ENCODE measurements at regions of chr1 and their contacts with region 1.

Region 1: DNA sequence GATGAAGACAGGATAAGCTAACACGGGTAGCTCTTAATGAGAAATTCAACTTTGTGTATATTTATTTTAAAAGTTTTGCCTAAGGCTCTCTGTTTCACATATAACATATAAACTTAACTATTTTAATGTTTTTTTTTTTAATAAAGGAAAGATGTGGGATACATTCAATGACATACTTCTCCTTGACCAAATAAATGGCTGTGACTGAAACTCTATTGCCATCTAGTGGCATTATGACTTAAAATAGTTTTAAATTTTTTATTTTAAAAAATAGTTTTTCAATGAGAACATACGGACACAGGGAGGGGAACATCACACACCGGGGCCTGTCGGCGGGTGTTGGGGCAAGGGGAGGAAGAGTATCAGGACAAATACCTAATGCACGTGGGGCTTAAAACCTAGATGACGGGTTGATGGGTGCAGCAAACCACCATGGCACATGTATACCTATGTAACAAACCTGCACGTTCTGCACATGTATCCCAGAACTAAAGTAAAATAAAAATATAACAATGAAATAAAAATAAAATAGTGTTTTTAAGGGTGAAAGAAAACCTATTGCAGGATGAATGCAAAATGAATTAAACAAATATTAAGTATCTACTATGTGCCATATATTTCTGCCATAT is 83.4 kb downstream of the LYST start:
- DNase-seq: peak; percentile 9 to 52
- H3K4me3 ChIP-seq: no peak overlapping the region
- H3K27ac ChIP-seq: no peak overlapping the region
- H3K4me1 ChIP-seq: 0 out of 2 replicates have a peak, but pooled peaks cover 4% of the 10 kb centered on the region
- H3K27me3 ChIP-seq: no peaks in the 10 kb centered on the region
- CTCF ChIP-seq: peak; percentile 71

Region 2: DNA sequence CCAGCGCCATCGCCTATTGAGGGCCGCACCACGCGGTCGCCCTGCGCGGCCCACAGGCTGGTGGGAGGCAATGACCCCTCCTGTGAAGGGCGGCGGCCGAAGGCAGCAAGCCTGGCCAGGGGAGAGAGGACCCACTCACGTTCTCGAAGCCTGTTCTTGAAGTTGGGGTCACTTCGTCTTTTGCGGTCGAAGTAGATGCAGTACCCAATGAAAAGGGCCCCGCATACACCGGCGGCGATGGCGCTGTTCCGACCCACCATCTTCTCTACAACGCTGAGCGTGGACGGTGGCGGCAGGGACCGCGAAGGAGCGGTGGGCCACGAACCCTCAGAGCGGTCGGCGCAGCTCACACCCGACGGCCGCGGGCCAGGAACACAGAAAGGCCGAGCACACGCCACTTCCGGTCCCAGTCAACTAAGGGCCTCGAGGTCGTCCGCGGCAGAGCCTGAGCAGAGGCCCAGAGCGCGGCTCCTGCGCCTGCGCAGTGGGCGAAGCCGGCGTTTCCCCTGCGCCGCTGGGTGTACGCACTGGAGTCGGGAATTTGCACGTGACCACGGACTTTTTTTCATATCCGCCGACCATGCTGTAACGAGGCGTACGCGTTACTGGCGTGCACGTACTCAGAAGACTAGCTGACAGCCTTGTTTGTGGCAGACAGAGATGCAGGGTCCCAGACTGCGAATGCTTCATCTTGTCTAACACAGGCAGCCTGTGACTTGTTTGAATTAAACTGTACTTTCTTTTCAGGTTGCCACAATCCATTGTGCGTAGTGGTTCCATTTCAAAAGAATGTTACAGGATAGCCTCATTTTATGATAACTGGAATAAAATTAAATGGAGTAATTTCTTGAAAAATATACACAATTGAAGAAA is 654.6 kb before region 1 on chr1 and contains the start of gene TOMM20:
- CTCF ChIA-PET with region 1: no interaction called
- POLR2A ChIA-PET with region 1: interaction called, 10 read pairs
- intact Hi-C with region 1: no loop called
- DNase-seq: peak; percentile 93 to 98
- H3K4me3 ChIP-seq: peak within 1 kb of the TSS; percentile 90
- H3K27ac ChIP-seq: peak within 1 kb of the TSS; percentile 74
- H3K4me1 ChIP-seq: peaks cover 43% of the 10 kb centered on the region
- H3K27me3 ChIP-seq: no peaks in the 10 kb centered on the region
- CTCF ChIP-seq: no peak
- total RNA-seq, gene TOMM20: 165 and 187 TPM in 2 replicates

Region 3: DNA sequence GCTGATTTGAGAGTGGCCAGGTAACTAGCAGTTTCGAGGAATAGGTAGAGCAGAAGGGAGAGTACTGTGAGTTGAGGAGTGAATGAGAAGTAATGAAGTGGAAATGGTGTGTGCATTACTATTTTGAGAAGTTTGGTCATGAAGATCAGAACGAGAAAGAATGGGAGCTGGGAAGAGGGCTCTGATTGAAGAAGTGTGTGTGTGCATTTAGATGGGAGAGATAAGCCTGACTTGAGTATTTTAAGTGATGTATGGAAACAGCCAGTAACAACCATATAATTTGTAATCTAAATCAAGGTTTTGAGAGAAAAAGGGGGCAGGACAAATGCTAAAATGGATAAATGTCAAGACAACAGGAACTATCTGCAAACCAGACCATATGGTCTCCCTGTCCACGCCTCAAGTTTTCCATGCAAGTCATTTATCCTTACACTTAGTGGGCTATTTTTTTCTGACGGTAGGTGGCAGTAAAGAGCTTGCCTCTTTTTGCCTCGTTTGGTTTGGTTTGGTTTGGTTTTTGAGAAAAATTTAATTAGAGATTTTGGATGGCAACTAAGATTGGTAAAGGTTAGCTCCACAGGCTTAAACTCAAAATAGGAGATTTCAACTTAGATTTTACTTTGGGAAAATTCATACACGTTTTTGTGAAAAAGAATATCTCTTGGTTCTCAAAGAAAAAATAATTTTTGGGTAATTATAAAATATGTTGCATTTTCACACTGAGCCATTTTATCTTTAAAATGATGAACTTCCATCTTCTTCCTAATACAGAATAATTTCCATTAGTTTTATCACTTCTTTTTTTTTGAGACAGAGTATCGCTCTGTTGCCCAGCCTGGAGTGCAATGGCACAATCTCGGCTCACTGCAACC is 269.5 kb before region 1 on chr1:
- CTCF ChIA-PET with region 1: interaction called, 7 read pairs
- POLR2A ChIA-PET with region 1: no interaction called
- intact Hi-C with region 1: loop called (anchors 1 kb)
- DNase-seq: peak; percentile 34 to 57
- H3K4me3 ChIP-seq: no peak overlapping the region
- H3K27ac ChIP-seq: no peak overlapping the region
- H3K4me1 ChIP-seq: no peaks in the 10 kb centered on the region
- H3K27me3 ChIP-seq: no peaks in the 10 kb centered on the region
- CTCF ChIP-seq: peak; percentile 93

Region 4: DNA sequence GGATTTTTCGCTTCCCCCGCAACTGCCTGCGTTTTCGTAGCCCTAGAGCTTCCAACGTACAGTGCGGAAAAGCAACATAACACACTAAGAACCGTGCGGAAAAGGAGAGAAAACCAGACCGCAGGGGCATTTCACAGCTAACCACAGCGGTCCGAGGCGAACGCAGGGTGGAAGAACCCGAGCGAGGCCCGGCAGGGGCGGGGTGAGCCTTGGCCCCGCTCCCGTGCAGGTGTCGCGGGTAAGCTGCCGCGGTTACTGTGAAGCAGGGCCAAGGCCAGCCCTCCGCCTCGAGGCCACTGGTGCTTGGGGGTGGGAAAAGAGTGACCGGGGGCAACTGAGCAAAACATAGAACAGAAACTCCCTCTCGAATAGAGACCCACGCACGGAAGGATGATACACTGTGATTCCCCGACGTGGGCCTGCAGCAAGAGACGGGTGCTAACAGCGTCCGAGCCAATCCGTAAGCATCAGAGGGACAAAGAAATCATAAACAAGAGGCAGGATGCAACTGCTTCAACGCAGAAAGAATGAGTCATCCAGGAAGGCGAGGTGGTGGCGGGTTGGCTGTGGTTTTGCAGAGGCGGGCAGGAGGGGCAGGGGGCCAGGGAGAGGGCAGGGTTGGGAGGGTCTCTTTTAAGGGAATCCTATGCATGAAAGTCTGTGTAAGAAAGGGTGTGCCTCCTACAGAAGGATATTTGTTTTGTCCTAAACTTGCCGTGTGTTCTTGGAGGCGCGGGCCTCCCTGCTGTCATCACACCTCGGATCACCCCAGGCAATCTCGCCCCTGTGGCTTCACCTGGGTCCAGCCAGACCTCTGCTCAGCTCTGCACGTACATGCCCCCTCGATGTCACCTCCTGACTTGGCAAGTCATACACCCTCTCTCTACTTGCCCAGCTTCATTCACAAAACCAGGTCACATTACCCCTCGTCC is 141.0 kb before region 1 on chr1:
- CTCF ChIA-PET with region 1: no interaction called
- POLR2A ChIA-PET with region 1: no interaction called
- intact Hi-C with region 1: loop called (anchors 2 kb)
- DNase-seq: peak; percentile 82 to 87
- H3K4me3 ChIP-seq: peak overlapping the region; percentile 41; the same call in 1 of the 2 replicates
- H3K27ac ChIP-seq: peak overlapping the region; percentile 63
- H3K4me1 ChIP-seq: peaks cover 29% of the 10 kb centered on the region
- H3K27me3 ChIP-seq: no peaks in the 10 kb centered on the region
- CTCF ChIP-seq: no peak

Region 5: GRCh38 chr1:235946571-235946981 is 163.3 kb after region 1 on chr1:
- CTCF ChIA-PET with region 1: no interaction called
- POLR2A ChIA-PET with region 1: no interaction called
- intact Hi-C with region 1: loop called (anchors 5 kb)
- DNase-seq: no peak
- H3K4me3 ChIP-seq: no peak overlapping the region
- H3K27ac ChIP-seq: no peak overlapping the region
- H3K4me1 ChIP-seq: peaks cover 13% of the 10 kb centered on the region; the same call in 1 of the 2 replicates
- H3K27me3 ChIP-seq: no peaks in the 10 kb centered on the region
- CTCF ChIP-seq: peak; percentile 66; the same call in 1 of the 2 replicates

Measured in PC-9 (cell line).